Natural killer cell (primary cell): ENCODE measurements at regions of chr14 and their contacts with region 1.

Region 1: DNA sequence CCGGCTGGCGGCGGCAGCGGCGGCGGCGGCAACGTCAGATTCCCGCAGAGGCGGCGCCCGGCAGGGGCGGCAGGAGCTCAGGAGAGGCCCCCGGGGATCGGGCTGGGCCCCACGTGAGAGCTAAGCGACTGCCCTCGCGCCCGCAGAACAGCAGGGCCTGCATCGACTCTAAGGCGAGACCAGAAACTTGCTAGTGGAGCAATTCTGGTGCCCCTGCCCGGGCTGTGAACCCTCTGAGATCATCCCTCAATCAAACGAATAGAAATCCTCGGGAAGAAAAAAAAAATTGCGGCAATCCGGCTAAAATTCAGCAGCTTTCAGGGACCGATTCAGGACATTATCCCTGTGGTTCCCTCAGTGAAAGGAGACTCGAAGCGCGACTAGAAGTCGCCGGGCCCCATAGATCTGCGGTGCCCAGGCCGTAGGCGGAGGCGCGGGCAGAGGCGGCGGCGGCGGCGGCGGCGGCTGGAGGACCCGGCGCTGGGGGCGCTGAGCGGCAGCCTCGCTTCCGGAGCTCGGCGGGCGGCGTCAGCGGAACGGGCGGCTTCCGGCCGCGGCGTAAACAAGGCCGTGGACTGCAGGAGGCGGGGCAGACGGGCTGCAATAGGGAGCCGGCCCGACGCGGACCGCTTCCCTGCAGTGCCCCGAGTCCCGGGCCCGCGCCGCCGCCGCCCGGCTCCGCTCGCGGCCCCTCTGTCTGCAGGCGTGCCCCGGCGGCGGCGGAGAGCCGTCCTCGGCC is at the start of gene KLHDC2:
- DNase-seq: peak; percentile 86 to 93
- ATAC-seq: peak; percentile 76 to 94 (median 88)
- H3K4me3 ChIP-seq: peak within 1 kb of the TSS; percentile 69
- H3K4me3 Mint-ChIP-seq: peak within 1 kb of the TSS; percentile 96
- H3K27ac ChIP-seq: peak within 1 kb of the TSS; percentile 96
- H3K27ac Mint-ChIP-seq: peak within 1 kb of the TSS; percentile 97
- H3K4me1 ChIP-seq: peaks cover 22% of the 10 kb centered on the region
- H3K4me1 Mint-ChIP-seq: peaks cover 24 to 30% of the 10 kb centered on the region in 2 donors
- H3K27me3 ChIP-seq: no peaks in the 10 kb centered on the region
- H3K27me3 Mint-ChIP-seq: no peaks in the 10 kb centered on the region
- CTCF ChIP-seq: peak; percentile 29
- total RNA-seq, gene KLHDC2: 60.4 to 64.2 (median 63.2) TPM

Region 2: DNA sequence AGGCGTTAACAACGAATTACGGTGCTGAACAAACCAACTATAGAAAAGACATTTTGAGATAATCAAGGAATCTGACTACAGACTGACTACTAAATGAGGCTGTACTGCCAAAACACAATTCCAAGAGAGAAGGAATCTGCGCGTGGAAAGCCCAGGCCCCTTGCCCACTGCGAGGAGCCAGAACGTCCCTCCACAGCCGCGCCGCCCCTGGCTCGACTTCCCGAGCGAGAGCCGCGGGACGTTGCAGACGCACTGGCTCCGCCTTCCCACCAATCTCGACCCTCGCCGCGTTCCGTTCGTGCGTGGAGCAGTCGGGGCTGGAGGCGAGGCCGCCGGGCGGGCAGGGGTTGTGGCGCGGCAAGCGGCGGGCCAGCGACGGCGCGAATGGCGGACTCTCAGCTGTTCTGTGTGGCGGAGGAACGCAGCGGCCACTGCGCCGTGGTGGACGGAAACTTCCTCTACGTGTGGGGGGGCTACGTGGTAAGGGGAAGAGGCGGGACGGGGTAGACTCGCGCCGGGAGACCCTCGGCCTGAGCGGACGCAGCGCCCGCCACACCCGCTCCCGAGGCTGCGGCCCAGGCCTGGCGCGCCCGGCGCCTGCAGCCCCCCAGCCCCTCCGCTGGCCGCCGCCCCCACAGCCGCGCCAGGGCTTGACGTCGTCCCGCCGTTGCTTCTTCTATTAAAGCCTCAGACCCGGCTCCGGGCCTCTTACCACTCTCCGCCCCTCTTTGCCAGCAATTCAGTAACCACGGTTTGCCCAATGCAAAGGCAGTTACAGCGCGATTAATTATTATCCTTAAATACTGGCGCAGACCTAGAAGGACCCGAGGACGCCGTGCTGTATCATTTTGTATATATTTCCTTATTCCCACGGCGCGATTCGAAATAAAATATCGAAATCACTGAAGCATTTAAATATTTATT is 74.7 kb before region 1 on chr14 and contains the start of gene KLHDC1:
- intact Hi-C with region 1: loop called (anchors 2 kb)
- DNase-seq: peak; percentile 73 to 90
- ATAC-seq: peak; percentile 81 to 88 (median 81)
- H3K4me3 ChIP-seq: peak within 1 kb of the TSS; percentile 65
- H3K4me3 Mint-ChIP-seq: peak within 1 kb of the TSS; percentile 82
- H3K27ac ChIP-seq: peak within 1 kb of the TSS; percentile 66
- H3K27ac Mint-ChIP-seq: peak within 1 kb of the TSS; percentile 76 to 86
- H3K4me1 ChIP-seq: peaks cover 9% of the 10 kb centered on the region
- H3K4me1 Mint-ChIP-seq: peaks cover 28 to 30% of the 10 kb centered on the region in 2 donors
- H3K27me3 ChIP-seq: no peaks in the 10 kb centered on the region
- H3K27me3 Mint-ChIP-seq: no peaks in the 10 kb centered on the region
- CTCF ChIP-seq: no peak
- total RNA-seq, gene KLHDC1: 6.3 to 7.0 (median 6.9) TPM